ENCODE measurements at regions of chr12 and their contacts with region 1.

Region 1: GRCh38 chr12:12611512-12612306 is at the start of gene CREBL2:
- DNase-seq: peak; percentile 95
- ATAC-seq: peak; percentile 93
- H3K4me3 ChIP-seq: peak within 1 kb of the TSS; percentile 67
- H3K27ac ChIP-seq: peak within 1 kb of the TSS; percentile 79
- H3K4me1 ChIP-seq: peaks cover 3% of the 10 kb centered on the region; the same call in 1 of the 2 replicates
- H3K27me3 ChIP-seq: no peaks in the 10 kb centered on the region
- CTCF ChIP-seq: no peak
- POLR2A ChIP-seq: peak; percentile 36; the same call in 1 of the 2 replicates
- RAD21 ChIP-seq: no peak
- total RNA-seq, gene CREBL2: 19.0 and 32.5 TPM in 2 replicates

Region 2: GRCh38 chr12:12696562-12697383 is 85.1 kb after region 1 on chr12:
- CTCF ChIA-PET with region 1: no interaction called
- POLR2A ChIA-PET with region 1: interaction called, 21 read pairs
- dilution Hi-C with region 1: no loop called
- in situ Hi-C with region 1: no loop called
- intact Hi-C with region 1: no loop called
- DNase-seq: peak; percentile 76
- ATAC-seq: peak; percentile 93
- H3K4me3 ChIP-seq: peak overlapping the region; percentile 66
- H3K27ac ChIP-seq: peak overlapping the region; percentile 59
- H3K4me1 ChIP-seq: no peaks in the 10 kb centered on the region
- H3K27me3 ChIP-seq: peaks cover 2% of the 10 kb centered on the region
- CTCF ChIP-seq: no peak
- POLR2A ChIP-seq: peak; percentile 33; the same call in 1 of the 2 replicates
- RAD21 ChIP-seq: no peak